T-cell (primary cell): ENCODE measurements at regions of chr4 and their contacts with region 1.

Region 1: DNA sequence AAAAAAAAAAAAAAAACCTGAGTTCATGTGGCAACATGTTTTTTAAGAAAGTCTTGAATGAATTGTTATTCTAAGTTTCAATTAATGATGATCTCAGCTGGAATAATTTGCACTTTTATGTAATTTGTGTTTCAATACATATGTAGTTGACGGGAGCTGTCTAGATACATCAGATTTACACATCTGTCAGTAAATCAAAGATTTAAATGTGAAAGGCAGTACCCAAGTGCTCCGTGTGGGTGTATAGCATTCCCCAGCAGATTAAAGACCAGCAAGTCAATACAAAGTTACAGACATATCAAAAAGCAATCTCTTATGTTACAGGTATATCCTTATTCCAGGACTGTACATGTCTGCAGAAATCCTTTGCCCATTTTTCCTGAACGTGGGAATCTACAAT is 35.2 kb downstream of the SYNPO2 start:
- DNase-seq: no peak
- ATAC-seq: no peak
- H3K4me3 ChIP-seq: no peak overlapping the region
- H3K4me3 Mint-ChIP-seq: no peak overlapping the region
- H3K27ac ChIP-seq: no peak overlapping the region
- H3K27ac Mint-ChIP-seq: no peak overlapping the region
- H3K4me1 ChIP-seq: no peaks in the 10 kb centered on the region
- H3K4me1 Mint-ChIP-seq: no peaks in the 10 kb centered on the region
- H3K27me3 ChIP-seq: no peaks in the 10 kb centered on the region
- H3K27me3 Mint-ChIP-seq: peaks cover 11 to 19% of the 10 kb centered on the region in 2 donors

Region 2: GRCh38 chr4:118992149-118992548 is 68.3 kb after region 1 on chr4:
- CTCF ChIA-PET with region 1: no interaction called
- POLR2A ChIA-PET with region 1: interaction called in 1 of 2 experiments, 15 read pairs
- DNase-seq: no peak
- ATAC-seq: no peak
- H3K4me3 ChIP-seq: no peak overlapping the region
- H3K4me3 Mint-ChIP-seq: no peak overlapping the region
- H3K27ac ChIP-seq: no peak overlapping the region
- H3K27ac Mint-ChIP-seq: no peak overlapping the region
- H3K4me1 ChIP-seq: no peaks in the 10 kb centered on the region
- H3K4me1 Mint-ChIP-seq: no peaks in the 10 kb centered on the region
- H3K27me3 ChIP-seq: no peaks in the 10 kb centered on the region
- H3K27me3 Mint-ChIP-seq: peaks cover 5 to 6% of the 10 kb centered on the region in 2 donors

Region 3: DNA sequence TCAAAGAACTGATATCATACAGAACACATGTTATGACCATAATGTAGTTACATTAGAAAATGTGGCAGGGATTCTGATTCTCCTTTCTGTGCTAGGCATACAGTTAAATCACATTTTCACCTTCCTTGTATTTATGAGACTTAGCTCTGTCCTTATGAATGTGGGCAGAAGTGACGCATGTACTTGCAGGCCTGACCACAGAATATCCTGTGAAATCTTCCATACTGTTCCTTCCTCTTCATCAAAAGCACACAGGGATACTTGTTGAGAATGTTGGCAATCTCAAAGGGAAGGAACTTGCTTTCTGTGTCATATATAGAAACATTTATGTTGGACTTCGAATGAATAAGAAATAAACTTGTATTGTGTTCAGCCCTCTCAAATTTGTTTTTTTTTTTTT is 194.5 kb after region 1 on chr4:
- CTCF ChIA-PET with region 1: no interaction called
- POLR2A ChIA-PET with region 1: no interaction called
- DNase-seq: no peak
- ATAC-seq: no peak
- H3K4me3 ChIP-seq: no peak overlapping the region
- H3K4me3 Mint-ChIP-seq: no peak overlapping the region
- H3K27ac ChIP-seq: no peak overlapping the region
- H3K27ac Mint-ChIP-seq: no peak overlapping the region
- H3K4me1 ChIP-seq: no peaks in the 10 kb centered on the region
- H3K4me1 Mint-ChIP-seq: peaks cover 0 to under 1% (median 0%) of the 10 kb centered on the region in 3 donors
- H3K27me3 ChIP-seq: no peaks in the 10 kb centered on the region
- H3K27me3 Mint-ChIP-seq: peaks cover 4 to 5% of the 10 kb centered on the region in 2 donors